Activated CD8-positive, alpha-beta memory T cell treated with anti-CD3 and anti-CD28 coated beads, Interleukin-2, amount 10 ng/mL, durations not matched to agents 7 days and 5 days (primary cell): ENCODE measurements at regions of chr17 and their contacts with region 1.

Region 1: GRCh38 chr17:45135192-45135977 is at the start of gene ACBD4:
- DNase-seq: peak; percentile 98
- ATAC-seq: peak; percentile 91
- H3K4me3 Mint-ChIP-seq: peak within 1 kb of the TSS; percentile 83
- H3K27ac Mint-ChIP-seq: peak within 1 kb of the TSS; percentile 85
- H3K4me1 Mint-ChIP-seq: peaks cover 19% of the 10 kb centered on the region
- H3K27me3 Mint-ChIP-seq: peaks cover 9% of the 10 kb centered on the region
- total RNA-seq, gene ACBD4: 14.9 to 20.6 TPM

Region 2: GRCh38 chr17:44899069-44899782 is 236.2 kb before region 1 on chr17 and contains the start of gene EFTUD2:
- CTCF ChIA-PET with region 1: interaction called, 11 read pairs
- DNase-seq: peak; percentile 94
- ATAC-seq: peak; percentile 97
- H3K4me3 Mint-ChIP-seq: peak within 1 kb of the TSS; percentile 85
- H3K27ac Mint-ChIP-seq: peak within 1 kb of the TSS; percentile 99
- H3K4me1 Mint-ChIP-seq: peaks cover 29% of the 10 kb centered on the region
- H3K27me3 Mint-ChIP-seq: peaks cover 8% of the 10 kb centered on the region
- total RNA-seq, gene EFTUD2: 134 to 178 TPM

Region 3: DNA sequence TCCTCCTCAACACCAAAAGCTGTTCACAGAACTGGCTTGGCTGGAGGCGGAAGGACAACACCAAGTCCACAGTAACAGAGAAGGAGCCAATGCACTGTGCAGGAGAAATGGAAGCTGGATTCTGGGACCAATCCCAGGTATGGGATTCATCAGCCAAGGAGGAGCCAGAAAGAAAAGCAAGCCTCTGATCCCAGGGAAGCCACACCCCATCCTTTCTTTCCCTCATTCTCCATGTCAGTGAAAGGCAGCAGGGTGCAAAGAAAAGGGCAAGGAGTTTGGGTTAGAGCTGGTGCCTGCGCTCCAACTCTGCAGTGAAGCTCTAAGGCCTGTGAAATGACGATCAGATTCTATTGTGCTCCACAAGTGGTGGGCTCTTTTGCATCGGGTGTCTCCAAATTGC is 94.9 kb before region 1 on chr17:
- CTCF ChIA-PET with region 1: no interaction called
- DNase-seq: no peak
- ATAC-seq: no peak
- H3K4me3 Mint-ChIP-seq: no peak overlapping the region
- H3K27ac Mint-ChIP-seq: no peak overlapping the region
- H3K4me1 Mint-ChIP-seq: peaks cover 7% of the 10 kb centered on the region
- H3K27me3 Mint-ChIP-seq: no peaks in the 10 kb centered on the region

Region 4: GRCh38 chr17:45051060-45051719 is 84.2 kb before region 1 on chr17 and contains the start of gene DCAKD:
- CTCF ChIA-PET with region 1: interaction called, 16 read pairs
- DNase-seq: peak; percentile 96
- ATAC-seq: peak; percentile 98
- H3K4me3 Mint-ChIP-seq: peak within 1 kb of the TSS; percentile 91
- H3K27ac Mint-ChIP-seq: peak within 1 kb of the TSS; percentile 91
- H3K4me1 Mint-ChIP-seq: peaks cover 45% of the 10 kb centered on the region
- H3K27me3 Mint-ChIP-seq: no peaks in the 10 kb centered on the region
- total RNA-seq, gene DCAKD: 29.4 to 34.3 TPM

Region 5: GRCh38 chr17:45115871-45116724 is 19.3 kb before region 1 on chr17:
- CTCF ChIA-PET with region 1: interaction called, 15 read pairs
- DNase-seq: no peak
- ATAC-seq: no peak
- H3K4me3 Mint-ChIP-seq: no peak overlapping the region
- H3K27ac Mint-ChIP-seq: no peak overlapping the region
- H3K4me1 Mint-ChIP-seq: no peaks in the 10 kb centered on the region
- H3K27me3 Mint-ChIP-seq: peaks cover 3% of the 10 kb centered on the region

Region 6: GRCh38 chr17:45172454-45173286 is 37.3 kb after region 1 on chr17:
- CTCF ChIA-PET with region 1: interaction called, 583 read pairs
- DNase-seq: peak; percentile 62
- ATAC-seq: peak; percentile 68
- H3K4me3 Mint-ChIP-seq: peak overlapping the region; percentile 48
- H3K27ac Mint-ChIP-seq: peak overlapping the region; percentile 89
- H3K4me1 Mint-ChIP-seq: peaks cover 21% of the 10 kb centered on the region
- H3K27me3 Mint-ChIP-seq: no peaks in the 10 kb centered on the region

Region 7: GRCh38 chr17:45228763-45229539 is 93.6 kb after region 1 on chr17:
- CTCF ChIA-PET with region 1: interaction called, 19 read pairs
- DNase-seq: peak; percentile 93
- ATAC-seq: peak; percentile 47
- H3K4me3 Mint-ChIP-seq: peak overlapping the region; percentile 93
- H3K27ac Mint-ChIP-seq: peak overlapping the region; percentile 100
- H3K4me1 Mint-ChIP-seq: peaks cover 74% of the 10 kb centered on the region
- H3K27me3 Mint-ChIP-seq: no peaks in the 10 kb centered on the region

Region 8: DNA sequence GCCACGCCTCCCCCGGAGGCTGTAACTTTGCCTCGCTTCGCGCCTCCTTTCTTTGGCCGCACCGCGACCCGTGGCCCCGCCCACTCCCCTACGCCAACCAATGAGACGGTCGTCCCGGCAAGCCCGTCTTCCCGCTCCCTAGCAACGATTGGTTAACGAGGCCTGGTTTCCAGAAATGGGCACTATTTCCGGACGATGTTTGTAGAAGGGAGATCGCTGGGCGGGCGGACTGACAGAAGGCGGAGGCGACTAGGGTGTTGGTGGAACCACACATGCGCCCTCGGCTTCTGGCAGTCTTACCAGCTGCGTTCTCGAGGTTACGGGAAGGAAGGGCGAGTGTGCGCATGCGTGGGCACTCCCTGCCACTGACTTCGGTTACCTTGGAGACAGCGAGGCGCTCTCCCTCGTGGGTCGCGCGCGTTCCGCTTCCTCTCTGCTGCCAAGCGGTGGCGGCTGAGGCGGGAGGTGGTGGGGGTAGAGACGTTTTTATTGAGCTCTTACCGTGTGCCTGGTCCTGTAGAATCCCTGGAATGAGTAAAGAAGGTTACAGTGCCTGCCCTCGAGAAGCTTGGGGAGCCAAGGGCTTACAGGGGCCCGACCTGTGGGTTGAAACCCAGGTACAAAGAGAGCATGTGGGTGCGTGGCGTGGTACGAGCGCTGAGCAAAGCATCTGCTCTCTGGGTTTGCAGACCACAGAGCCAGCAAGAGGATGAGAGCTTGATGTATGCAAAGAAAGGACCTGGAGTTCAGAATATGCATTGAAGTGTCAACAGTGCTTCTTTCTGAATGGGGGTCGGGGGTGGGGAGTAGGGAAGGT is 181.9 kb after region 1 on chr17:
- CTCF ChIA-PET with region 1: interaction called, 12 read pairs
- DNase-seq: peak; percentile 100
- ATAC-seq: peak; percentile 84
- H3K4me3 Mint-ChIP-seq: peak overlapping the region; percentile 81
- H3K27ac Mint-ChIP-seq: peak overlapping the region; percentile 85
- H3K4me1 Mint-ChIP-seq: peaks cover 66% of the 10 kb centered on the region
- H3K27me3 Mint-ChIP-seq: no peaks in the 10 kb centered on the region